ENCODE measurements at regions of chrX and their contacts with region 1.

Region 1: DNA sequence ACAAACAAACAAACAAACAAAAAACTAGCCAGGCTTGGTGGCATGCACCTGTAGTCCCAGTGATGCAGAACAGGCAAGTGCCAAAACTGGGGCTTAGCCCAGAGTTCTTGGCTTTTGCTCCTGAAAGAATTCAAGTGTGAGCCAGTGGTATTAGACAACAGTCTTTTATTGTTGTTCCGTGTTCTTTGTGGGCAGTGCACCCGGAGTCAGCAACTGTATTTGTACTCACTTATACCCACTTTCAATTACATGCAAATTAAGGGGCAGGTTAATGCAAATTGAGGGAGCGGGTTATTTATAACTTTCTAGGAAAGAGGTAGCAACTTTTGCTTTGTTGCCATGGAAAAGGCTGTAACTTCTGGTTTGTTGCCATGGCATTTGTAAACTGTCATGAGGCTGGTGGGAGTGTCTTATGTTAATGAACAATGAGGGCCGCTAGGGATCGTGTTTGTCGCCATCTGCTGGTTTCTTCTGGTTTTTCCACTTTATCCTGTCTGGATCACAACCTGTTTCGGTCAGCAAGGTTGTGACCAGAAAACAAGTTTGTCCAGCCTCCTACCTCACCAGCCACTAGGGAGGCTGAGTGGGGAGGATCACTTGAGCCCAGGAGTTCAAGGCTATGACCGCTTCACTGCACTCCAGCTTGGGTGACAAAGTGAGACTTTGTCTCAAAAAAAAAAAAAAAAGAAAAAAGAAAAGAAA is 88.8 kb upstream of the ESX1 start:
- DNase-seq: peak; percentile 51 to 71
- H3K4me3 ChIP-seq: no peak overlapping the region
- H3K4me3 Mint-ChIP-seq: no peak overlapping the region
- H3K27ac Mint-ChIP-seq: no peak overlapping the region
- H3K4me1 ChIP-seq: no peaks in the 10 kb centered on the region
- H3K4me1 Mint-ChIP-seq: no peaks in the 10 kb centered on the region
- H3K27me3 ChIP-seq: no peaks in the 10 kb centered on the region
- H3K27me3 Mint-ChIP-seq: peaks cover 15% of the 10 kb centered on the region
- CTCF ChIP-seq: peak; percentile 35 to 36

Region 2: DNA sequence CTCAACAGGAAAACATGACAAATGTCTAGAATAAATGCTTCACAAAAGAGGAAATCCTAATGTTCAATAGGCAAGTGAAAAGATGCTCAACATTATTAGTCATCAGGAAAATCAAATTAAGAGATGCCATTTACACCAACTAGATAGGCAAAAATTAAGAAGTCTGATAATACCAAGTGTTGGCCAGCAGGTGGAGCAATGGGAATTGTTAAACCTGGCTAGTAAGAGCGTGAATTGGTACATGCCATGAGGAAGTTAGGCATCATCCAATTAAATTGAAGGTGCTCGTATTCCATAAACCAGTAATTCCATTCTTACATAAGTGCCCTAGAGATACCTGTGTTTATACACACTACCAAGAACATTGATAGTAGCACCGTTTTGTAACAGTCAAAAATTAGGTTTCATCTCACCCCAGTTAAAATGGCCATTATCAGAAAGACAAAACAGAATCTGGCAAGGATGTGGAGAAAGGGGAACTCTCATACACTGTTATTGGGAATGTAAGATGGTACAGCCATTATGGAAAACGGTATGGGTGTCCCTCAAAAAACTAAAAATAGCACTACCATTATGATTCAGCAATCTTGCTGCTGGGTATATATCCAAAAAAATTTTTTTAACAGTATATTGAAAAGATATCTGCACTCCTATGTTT is 245.3 kb before region 1 on chrX:
- CTCF ChIA-PET with region 1: no interaction called
- POLR2A ChIA-PET with region 1: no interaction called
- intact Hi-C with region 1: no loop called
- DNase-seq: peak in 1 of 2 experiments; percentile 50
- H3K4me3 ChIP-seq: no peak overlapping the region
- H3K4me3 Mint-ChIP-seq: no peak overlapping the region
- H3K27ac Mint-ChIP-seq: no peak overlapping the region
- H3K4me1 ChIP-seq: no peaks in the 10 kb centered on the region
- H3K4me1 Mint-ChIP-seq: no peaks in the 10 kb centered on the region
- H3K27me3 ChIP-seq: no peaks in the 10 kb centered on the region
- H3K27me3 Mint-ChIP-seq: peaks cover 9% of the 10 kb centered on the region
- CTCF ChIP-seq: peak; percentile 34 to 52

Region 3: GRCh38 chrX:104195489-104196084 is 148.0 kb before region 1 on chrX:
- CTCF ChIA-PET with region 1: no interaction called
- POLR2A ChIA-PET with region 1: no interaction called
- intact Hi-C with region 1: loop called (anchors 10 kb)
- DNase-seq: peak in 1 of 2 experiments; percentile 16
- H3K4me3 ChIP-seq: no peak overlapping the region
- H3K4me3 Mint-ChIP-seq: no peak overlapping the region
- H3K27ac Mint-ChIP-seq: no peak overlapping the region
- H3K4me1 ChIP-seq: no peaks in the 10 kb centered on the region
- H3K4me1 Mint-ChIP-seq: no peaks in the 10 kb centered on the region
- H3K27me3 ChIP-seq: no peaks in the 10 kb centered on the region
- H3K27me3 Mint-ChIP-seq: no peaks in the 10 kb centered on the region
- CTCF ChIP-seq: peak; percentile 36 to 48

Region 4: DNA sequence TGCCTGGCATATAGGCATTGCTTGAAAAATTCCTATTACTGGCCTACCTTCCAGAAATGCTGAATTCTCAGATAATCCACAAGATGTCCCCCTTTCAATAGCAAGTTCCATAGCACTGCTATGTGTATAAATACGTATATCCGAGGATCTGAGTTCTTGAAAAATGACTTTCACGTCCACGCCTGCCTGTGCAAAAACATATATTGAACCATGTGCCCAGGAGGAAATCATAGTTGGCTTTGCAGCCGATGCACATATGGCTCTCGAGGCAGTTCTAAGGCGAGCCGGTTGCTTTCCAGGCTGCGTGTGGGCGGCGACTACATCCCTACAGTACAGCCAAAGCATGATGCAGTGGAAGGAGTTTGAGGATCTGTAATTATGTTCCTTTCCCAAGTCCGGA is 33.5 kb before region 1 on chrX:
- CTCF ChIA-PET with region 1: no interaction called
- POLR2A ChIA-PET with region 1: no interaction called
- intact Hi-C with region 1: loop called (anchors 1 kb)
- DNase-seq: peak in 1 of 2 experiments; percentile 1
- H3K4me3 ChIP-seq: no peak overlapping the region
- H3K4me3 Mint-ChIP-seq: no peak overlapping the region
- H3K27ac Mint-ChIP-seq: no peak overlapping the region
- H3K4me1 ChIP-seq: no peaks in the 10 kb centered on the region
- H3K4me1 Mint-ChIP-seq: peaks cover 13% of the 10 kb centered on the region
- H3K27me3 ChIP-seq: no peaks in the 10 kb centered on the region
- H3K27me3 Mint-ChIP-seq: no peaks in the 10 kb centered on the region
- CTCF ChIP-seq: peak in 1 of 2 experiments; percentile 11

Region 5: DNA sequence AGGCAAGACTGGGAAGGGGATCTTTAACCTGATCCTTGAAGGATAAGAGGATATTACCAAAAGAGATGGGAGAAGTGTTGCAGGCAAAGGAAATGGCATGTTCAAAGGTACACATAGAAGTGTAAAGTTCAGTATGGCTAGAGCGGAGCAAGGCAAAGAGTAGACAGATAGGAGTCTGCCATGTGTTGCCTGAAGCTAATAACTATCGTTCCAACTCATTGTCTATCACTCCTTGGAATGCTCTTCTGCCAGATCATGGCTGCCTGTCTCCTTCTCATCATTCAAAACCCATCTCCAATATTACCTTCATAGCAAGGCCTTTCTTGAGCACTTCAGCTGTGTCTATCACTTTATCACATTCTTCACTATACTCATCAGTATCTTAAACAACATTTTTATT is 167.2 kb after region 1 on chrX:
- CTCF ChIA-PET with region 1: no interaction called
- POLR2A ChIA-PET with region 1: no interaction called
- intact Hi-C with region 1: no loop called
- DNase-seq: no peak
- H3K4me3 ChIP-seq: no peak overlapping the region
- H3K4me3 Mint-ChIP-seq: no peak overlapping the region
- H3K27ac Mint-ChIP-seq: no peak overlapping the region
- H3K4me1 ChIP-seq: no peaks in the 10 kb centered on the region
- H3K4me1 Mint-ChIP-seq: no peaks in the 10 kb centered on the region
- H3K27me3 ChIP-seq: no peaks in the 10 kb centered on the region
- H3K27me3 Mint-ChIP-seq: no peaks in the 10 kb centered on the region
- CTCF ChIP-seq: no peak

Measured in Caco-2 (cell line).